PC-9 (cell line): ENCODE measurements at regions of chr12 and their contacts with region 1.

Region 1: DNA sequence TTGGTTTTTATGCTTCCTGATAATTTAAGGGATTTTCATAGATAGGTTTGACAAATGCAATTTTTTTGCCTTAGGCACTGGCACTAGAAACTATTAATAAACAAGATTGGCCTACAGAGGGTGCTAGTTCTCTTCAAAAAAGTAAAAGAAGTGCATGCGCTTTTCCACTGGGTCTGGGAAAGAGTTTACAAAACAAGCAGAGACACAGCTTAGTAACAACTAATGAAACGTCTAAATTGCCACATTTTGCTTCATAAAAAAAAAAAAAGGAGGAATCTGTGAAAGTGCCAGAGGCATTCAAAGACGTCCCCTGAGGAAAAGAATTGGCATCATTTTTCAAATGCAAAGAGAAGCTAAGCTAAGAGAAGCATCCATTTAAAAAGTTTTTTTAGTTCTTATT is 58.3 kb upstream of the EEA1 start:
- DNase-seq: peak in 1 of 2 experiments; percentile 72
- H3K4me3 ChIP-seq: no peak overlapping the region
- H3K27ac ChIP-seq: no peak overlapping the region
- H3K4me1 ChIP-seq: peaks cover 14% of the 10 kb centered on the region
- H3K27me3 ChIP-seq: no peaks in the 10 kb centered on the region
- CTCF ChIP-seq: peak; percentile 78

Region 2: DNA sequence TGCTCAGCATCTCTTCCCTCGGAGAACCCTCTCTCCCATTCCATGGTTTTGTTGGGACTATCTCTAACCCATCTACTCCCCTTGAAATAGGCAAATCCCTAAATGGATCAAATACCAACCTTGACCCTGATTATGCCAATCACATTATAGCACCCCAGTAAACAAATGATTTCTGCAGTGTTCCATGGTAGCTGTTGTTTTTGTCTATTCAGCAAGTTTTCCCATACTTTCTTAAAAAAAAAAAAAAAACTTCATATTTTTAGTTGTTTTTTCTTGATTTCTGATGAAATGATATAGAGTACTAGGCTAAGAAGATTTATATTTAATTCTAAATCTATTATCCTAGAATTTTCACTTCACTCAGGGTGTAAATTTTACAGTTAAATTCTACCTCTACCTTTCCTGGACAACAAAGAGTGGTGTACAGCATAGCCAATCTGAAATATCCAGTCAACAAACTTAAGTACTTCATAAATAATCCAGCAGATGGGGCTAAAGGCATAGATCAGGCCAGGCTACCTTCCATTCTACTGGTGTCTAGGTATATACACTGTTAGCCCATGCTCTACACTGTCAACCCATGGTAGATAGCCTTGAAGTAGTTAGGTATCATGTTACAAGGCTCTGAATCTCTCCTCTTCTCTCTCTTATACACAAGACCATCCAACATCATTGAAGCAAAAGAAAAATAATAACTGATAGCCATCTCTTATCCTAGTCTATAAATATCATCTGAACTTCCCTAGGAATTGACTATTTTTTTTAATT is 202.4 kb before region 1 on chr12:
- CTCF ChIA-PET with region 1: no interaction called
- POLR2A ChIA-PET with region 1: no interaction called
- intact Hi-C with region 1: loop called (anchors 5 kb)
- DNase-seq: peak; percentile 23 to 74
- H3K4me3 ChIP-seq: no peak overlapping the region
- H3K27ac ChIP-seq: no peak overlapping the region
- H3K4me1 ChIP-seq: no peaks in the 10 kb centered on the region
- H3K27me3 ChIP-seq: no peaks in the 10 kb centered on the region
- CTCF ChIP-seq: peak; percentile 76

Region 3: GRCh38 chr12:92928962-92929915 is 58.1 kb before region 1 on chr12 and contains the start of gene EEA1:
- CTCF ChIA-PET with region 1: interaction called, 3 read pairs
- POLR2A ChIA-PET with region 1: interaction called, 3 read pairs
- intact Hi-C with region 1: loop called (anchors 10 kb)
- DNase-seq: peak; percentile 88 to 95
- H3K4me3 ChIP-seq: peak within 1 kb of the TSS; percentile 59
- H3K27ac ChIP-seq: peak within 1 kb of the TSS; percentile 91
- H3K4me1 ChIP-seq: peaks cover 40% of the 10 kb centered on the region
- H3K27me3 ChIP-seq: no peaks in the 10 kb centered on the region
- CTCF ChIP-seq: no peak
- total RNA-seq, gene EEA1: 10.1 and 15.7 TPM in 2 replicates

Region 4: GRCh38 chr12:93089805-93090569 is 102.6 kb after region 1 on chr12:
- CTCF ChIA-PET with region 1: no interaction called
- POLR2A ChIA-PET with region 1: no interaction called
- intact Hi-C with region 1: loop called (anchors 2 kb)
- DNase-seq: peak; percentile 14 to 90
- H3K4me3 ChIP-seq: no peak overlapping the region
- H3K27ac ChIP-seq: peak overlapping the region; percentile 82
- H3K4me1 ChIP-seq: peaks cover 53% of the 10 kb centered on the region
- H3K27me3 ChIP-seq: no peaks in the 10 kb centered on the region
- CTCF ChIP-seq: no peak

Region 5: DNA sequence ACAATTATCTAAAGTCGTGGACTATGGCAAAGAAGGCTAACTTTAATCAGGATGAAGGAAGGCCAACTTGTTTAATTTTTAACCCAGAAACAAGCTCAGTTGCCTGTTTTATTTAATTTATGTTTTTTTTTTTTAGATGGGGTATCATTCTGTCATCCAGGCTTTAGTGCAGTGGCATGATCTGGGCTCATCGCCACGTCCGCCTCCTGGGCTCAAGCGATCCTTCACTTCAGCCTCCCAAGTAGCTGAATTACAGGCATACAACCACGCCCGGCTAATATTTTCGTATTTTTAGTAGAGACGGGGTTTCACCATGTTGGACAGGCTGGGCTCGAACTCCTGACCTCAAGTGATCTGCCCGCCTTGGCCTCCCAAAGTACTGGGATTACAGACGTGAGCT is 410.1 kb after region 1 on chr12:
- CTCF ChIA-PET with region 1: interaction called, 12 read pairs
- POLR2A ChIA-PET with region 1: no interaction called
- intact Hi-C with region 1: loop called (anchors 2 kb)
- DNase-seq: no peak
- H3K4me3 ChIP-seq: no peak overlapping the region
- H3K27ac ChIP-seq: no peak overlapping the region
- H3K4me1 ChIP-seq: no peaks in the 10 kb centered on the region
- H3K27me3 ChIP-seq: no peaks in the 10 kb centered on the region
- CTCF ChIP-seq: no peak

Region 6: GRCh38 chr12:94101738-94102660 is 1114.6 kb after region 1 on chr12:
- CTCF ChIA-PET with region 1: no interaction called
- POLR2A ChIA-PET with region 1: no interaction called
- intact Hi-C with region 1: loop called (anchors 5 kb)
- DNase-seq: peak; percentile 69 to 75
- H3K4me3 ChIP-seq: peak overlapping the region; percentile 59; the same call in 1 of the 2 replicates
- H3K27ac ChIP-seq: no peak overlapping the region
- H3K4me1 ChIP-seq: peaks cover 41% of the 10 kb centered on the region
- H3K27me3 ChIP-seq: no peaks in the 10 kb centered on the region
- CTCF ChIP-seq: peak; percentile 78